CD8-positive, alpha-beta T cell (primary cell): ENCODE measurements at regions of chr1 and their contacts with region 1.

Region 1: DNA sequence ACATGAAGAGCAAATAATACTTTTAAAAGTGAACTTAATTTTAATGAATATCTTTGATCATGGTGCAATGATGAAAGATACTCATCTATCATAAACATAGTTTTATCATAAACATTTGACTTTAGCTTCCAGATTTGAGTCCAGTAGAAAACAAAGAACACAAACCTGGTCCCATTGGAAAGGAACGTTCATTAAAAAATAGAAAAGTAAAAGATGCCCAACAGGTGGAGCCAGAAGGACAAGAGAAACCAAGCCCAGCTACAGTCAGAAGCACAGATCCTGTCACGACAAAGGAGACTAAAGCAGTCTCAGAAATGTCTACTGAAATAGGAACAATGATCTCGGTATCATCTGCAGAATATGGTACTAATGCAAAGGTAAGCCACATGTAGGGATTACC is 55.6 kb upstream of the MYOCOS start:
- DNase-seq: no peak
- ATAC-seq: no peak
- H3K4me3 ChIP-seq: no peak overlapping the region
- H3K4me3 Mint-ChIP-seq: no peak overlapping the region
- H3K27ac ChIP-seq: no peak overlapping the region
- H3K27ac Mint-ChIP-seq: no peak overlapping the region
- H3K4me1 ChIP-seq: no peaks in the 10 kb centered on the region
- H3K4me1 Mint-ChIP-seq: no peaks in the 10 kb centered on the region
- H3K27me3 ChIP-seq: no peaks in the 10 kb centered on the region
- H3K27me3 Mint-ChIP-seq: no peaks in the 10 kb centered on the region
- CTCF ChIP-seq: no peak

Region 2: GRCh38 chr1:171530676-171531075 is 35.8 kb before region 1 on chr1:
- CTCF ChIA-PET with region 1: no interaction called
- POLR2A ChIA-PET with region 1: interaction called, 3 read pairs
- intact Hi-C with region 1: loop called in 1 of 2 experiments (anchors 5 kb)
- DNase-seq: no peak
- ATAC-seq: no peak
- H3K4me3 ChIP-seq: no peak overlapping the region
- H3K4me3 Mint-ChIP-seq: no peak overlapping the region
- H3K27ac ChIP-seq: no peak overlapping the region
- H3K27ac Mint-ChIP-seq: no peak overlapping the region
- H3K4me1 ChIP-seq: no peaks in the 10 kb centered on the region
- H3K4me1 Mint-ChIP-seq: peaks cover 10% of the 10 kb centered on the region
- H3K27me3 ChIP-seq: no peaks in the 10 kb centered on the region
- H3K27me3 Mint-ChIP-seq: no peaks in the 10 kb centered on the region
- CTCF ChIP-seq: no peak